ENCODE measurements at regions of chr22 and their contacts with region 1.

Region 1: DNA sequence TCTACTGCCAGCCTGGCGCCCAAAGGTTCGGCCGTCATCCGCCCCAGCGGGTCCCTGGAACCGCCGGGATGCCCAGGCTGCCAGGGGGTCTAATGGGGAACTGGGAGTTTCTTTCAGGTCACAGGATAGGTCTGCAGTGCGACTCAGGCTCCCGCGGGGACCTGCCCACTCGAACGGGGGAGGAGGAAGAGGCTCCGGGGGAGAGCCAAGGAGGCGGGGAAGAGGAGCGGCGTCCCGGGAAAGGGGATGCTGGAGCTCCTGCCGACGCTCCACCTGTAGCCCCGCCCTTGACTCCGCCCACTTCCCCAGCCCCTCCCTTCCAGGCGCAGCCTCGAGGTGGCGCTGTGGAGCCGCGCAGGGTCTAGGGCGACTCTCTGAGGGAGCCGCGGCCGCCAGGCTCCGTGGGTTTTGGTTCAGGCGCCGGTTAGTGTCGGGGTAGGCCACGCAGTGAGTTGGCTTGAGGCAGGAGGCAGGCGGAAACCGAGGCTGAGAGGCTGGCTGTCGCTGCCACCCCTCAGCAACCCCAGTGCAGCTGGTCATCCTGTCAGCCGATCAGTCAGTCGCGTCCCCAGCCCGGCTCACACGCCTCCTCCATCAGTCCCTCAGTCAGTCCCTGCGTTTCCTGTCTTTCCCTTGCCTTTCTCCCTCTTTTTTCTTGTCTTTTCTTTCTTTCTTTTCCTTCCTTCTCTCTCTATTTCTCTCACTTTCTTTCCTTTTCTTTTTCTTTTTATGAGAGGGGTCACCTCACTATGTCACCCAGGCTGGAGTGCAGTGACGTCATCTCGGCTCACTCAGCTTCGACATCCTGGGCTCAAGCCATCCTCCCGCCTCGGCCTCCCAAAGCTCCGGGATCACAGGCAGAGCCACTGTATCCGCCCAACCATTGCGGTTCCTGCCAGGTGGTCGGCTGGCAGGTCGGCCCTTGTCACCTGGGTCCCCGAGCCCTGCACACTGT is 26.4 kb downstream of the YWHAH start:
- DNase-seq: peak; percentile 61 to 100
- H3K4me3 ChIP-seq: peak overlapping the region; percentile 36 to 88 (median 68)
- H3K27ac ChIP-seq: no peak overlapping the region
- H3K4me1 ChIP-seq: peaks cover 0 to 2% (median 0%) of the 10 kb centered on the region in 4 experiments; a peak in 1 of 7 replicates
- H3K27me3 ChIP-seq: peaks cover 0 to 7% (median 2%) of the 10 kb centered on the region in 4 experiments; a peak in 3 of 7 replicates
- CTCF ChIP-seq: peak; percentile 93 to 95 (median 94)
- EP300 ChIP-seq: 0 out of 3 replicates have a peak, but pooled peaks of 1 of the 2 experiments have one; percentile 31
- POLR2A ChIP-seq: no peak
- RAD21 ChIP-seq: peak; percentile 73 to 84

Region 2: DNA sequence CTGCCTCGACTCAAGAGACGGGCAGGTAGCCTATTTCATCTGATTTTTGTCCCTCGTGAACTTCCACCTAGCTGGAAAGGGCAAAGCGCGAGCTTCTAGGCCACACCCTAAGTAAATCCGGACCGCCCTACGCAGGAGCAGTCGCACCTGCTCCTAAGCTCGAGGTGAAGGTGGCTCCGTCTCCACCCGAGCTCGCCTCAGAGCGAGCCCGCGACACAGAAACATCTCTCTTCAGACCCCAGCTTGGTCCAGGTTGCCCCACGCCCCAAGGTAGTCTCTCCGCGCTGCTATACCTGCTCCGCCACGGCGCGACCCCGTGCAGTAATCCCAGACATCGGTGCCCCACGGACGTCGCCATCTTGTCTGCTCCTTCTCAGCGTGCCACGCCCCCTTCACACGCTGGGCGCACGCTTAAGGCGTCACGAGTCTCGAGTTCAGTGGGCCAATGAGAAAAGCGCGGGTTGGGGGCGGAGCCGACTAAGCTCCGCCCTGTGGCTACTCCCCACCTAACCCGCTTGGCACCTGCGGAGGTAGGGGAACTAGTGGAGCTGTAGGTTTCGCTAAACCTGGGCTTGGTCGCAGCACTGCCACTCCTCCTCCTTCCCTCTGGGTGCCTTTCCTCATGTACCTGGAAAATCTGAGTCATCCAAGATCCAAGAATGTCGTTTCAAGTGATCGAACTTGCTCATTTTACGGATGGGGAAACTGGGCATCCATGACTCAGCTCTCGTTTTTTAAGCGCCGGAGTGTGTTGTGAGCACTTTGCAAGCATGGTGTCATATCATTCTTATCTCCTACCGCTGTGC is 308.7 kb before region 1 on chr22 and contains the start of gene PISD:
- CTCF ChIA-PET with region 1: interaction called, 15 read pairs
- POLR2A ChIA-PET with region 1: no interaction called
- DNase-seq: peak; percentile 92 to 99
- H3K4me3 ChIP-seq: peak within 1 kb of the TSS; percentile 51 to 97 (median 90)
- H3K27ac ChIP-seq: peak within 1 kb of the TSS; percentile 82
- H3K4me1 ChIP-seq: peaks cover 3 to 7% (median 7%) of the 10 kb centered on the region in 4 experiments; a peak in 5 of 7 replicates
- H3K27me3 ChIP-seq: no peaks in the 10 kb centered on the region
- CTCF ChIP-seq: no peak
- EP300 ChIP-seq: 0 out of 3 replicates have a peak, but pooled peaks of 1 of the 2 experiments have one; percentile 40
- POLR2A ChIP-seq: peak; percentile 73 to 92; a peak in 2 of 3 replicates
- RAD21 ChIP-seq: no peak
- total RNA-seq, gene PISD: 46.0 and 47.8 TPM in 2 replicates

Region 3: GRCh38 chr22:31818481-31819392 is 152.0 kb before region 1 on chr22:
- CTCF ChIA-PET with region 1: interaction called, 10 read pairs
- POLR2A ChIA-PET with region 1: no interaction called
- DNase-seq: no peak
- H3K4me3 ChIP-seq: no peak overlapping the region
- H3K27ac ChIP-seq: no peak overlapping the region
- H3K4me1 ChIP-seq: no peaks in the 10 kb centered on the region
- H3K27me3 ChIP-seq: no peaks in the 10 kb centered on the region
- CTCF ChIP-seq: peak; percentile 17 to 42 (median 31)
- EP300 ChIP-seq: no peak
- POLR2A ChIP-seq: no peak
- RAD21 ChIP-seq: peak; percentile 46 to 65

Region 4: DNA sequence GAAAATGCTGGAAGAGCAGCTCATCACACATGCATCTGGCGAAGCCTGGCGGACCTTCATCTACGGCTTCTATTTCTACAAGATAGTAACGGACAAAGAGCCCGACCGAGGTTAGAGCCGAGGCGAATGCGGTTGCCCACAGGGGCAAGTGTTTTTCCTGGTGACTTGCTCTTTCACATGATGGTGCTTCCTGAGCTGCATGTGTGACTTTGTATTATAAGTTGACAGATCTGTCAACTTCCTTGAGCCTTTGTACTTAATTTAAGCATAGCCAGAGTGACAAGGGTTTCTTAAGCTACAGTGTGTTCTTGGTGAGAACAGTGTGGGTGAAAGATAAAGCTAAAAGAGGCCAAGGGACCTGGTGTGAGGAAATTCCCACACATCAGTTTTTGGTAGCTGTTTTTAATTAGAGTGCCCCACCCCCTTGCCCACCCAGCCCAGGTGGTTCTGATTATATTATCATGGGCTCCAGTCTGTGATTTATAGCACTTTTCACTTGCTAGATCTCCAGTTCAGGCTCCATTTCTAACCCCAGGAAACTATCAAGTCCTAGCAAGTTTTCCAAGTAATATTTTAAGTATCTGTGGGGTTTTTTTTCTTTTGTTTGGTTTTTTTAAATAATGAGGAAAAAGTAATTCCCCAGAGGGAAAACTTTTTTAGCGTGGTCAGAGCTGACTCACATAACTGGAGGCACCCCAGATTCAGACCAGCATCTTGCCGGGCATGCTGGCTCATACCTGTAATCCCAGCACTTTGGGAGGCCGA is 94.4 kb before region 1 on chr22:
- CTCF ChIA-PET with region 1: interaction called, 11 read pairs
- POLR2A ChIA-PET with region 1: no interaction called
- DNase-seq: no peak
- H3K4me3 ChIP-seq: no peak overlapping the region
- H3K27ac ChIP-seq: no peak overlapping the region
- H3K4me1 ChIP-seq: no peaks in the 10 kb centered on the region
- H3K27me3 ChIP-seq: no peaks in the 10 kb centered on the region
- CTCF ChIP-seq: no peak
- EP300 ChIP-seq: no peak
- POLR2A ChIP-seq: no peak
- RAD21 ChIP-seq: no peak

Region 5: DNA sequence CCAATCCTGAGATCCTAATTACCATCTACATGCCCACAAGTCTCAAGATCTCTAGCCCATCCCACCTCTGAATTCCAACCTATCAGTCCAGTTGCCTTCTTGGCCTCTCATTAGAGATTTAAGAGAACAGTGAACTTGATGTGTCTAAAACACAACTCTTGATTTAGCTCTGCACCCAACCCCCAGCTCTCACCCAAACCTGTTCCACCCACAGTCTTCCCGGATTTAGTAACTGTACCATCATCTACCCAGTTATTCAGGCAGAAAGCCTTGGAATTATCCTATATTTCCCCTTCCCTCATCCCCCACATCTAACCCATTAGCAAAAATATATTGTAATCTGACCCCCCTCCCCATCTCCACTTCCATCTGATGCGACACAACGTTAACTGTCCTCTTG is 50.5 kb before region 1 on chr22:
- CTCF ChIA-PET with region 1: interaction called, 14 read pairs
- POLR2A ChIA-PET with region 1: no interaction called
- DNase-seq: no peak
- H3K4me3 ChIP-seq: no peak overlapping the region
- H3K27ac ChIP-seq: no peak overlapping the region
- H3K4me1 ChIP-seq: no peaks in the 10 kb centered on the region
- H3K27me3 ChIP-seq: no peaks in the 10 kb centered on the region
- CTCF ChIP-seq: no peak
- EP300 ChIP-seq: no peak
- POLR2A ChIP-seq: no peak
- RAD21 ChIP-seq: no peak

Region 6: DNA sequence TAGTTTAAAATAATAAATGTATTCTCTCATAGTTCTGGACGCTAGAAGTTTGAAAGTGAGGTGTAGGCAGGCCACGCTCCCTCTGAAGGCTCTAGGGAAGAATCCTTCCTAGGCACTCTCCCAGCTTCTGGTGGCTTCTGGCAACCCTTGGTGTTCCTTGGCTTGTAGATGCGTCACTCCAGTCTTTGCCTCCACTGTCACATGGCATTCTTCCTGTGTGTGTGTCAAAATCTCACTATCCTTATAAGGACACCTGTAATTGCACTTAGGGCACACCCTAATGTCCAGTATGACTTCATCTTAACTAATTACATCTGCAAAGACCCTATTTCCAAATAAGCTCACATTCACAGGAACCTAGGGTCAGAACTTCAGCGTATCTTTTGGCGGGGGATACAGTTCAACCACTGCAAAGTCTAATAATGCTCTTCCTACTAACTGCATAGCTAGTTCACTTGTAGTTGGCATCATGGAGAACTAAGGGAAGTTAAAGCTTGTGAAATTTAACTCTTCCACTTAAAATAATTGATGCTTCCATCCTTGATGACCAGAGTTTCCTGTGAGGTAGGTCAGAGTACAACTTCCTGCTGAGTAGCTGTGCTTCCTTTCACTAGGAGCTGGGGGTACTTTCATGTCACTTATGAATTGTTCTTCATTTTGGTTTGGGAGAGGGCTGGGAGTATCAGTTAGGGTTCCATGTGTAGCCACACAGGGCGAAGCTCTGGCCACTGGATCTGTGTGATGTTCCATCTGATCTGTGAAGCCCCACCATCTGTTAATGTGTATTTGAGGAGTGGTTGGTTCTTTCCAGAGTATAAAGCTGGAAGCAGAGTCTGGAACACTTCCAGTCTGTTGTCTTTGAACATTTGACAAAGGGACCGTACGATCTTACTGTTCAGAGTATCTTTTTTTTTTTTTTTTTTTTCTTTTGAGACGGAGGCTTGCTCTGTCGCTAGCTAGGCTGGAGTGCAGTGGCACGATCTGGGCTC is 15.9 kb before region 1 on chr22:
- CTCF ChIA-PET with region 1: interaction called, 21 read pairs
- POLR2A ChIA-PET with region 1: interaction called, 4 read pairs
- DNase-seq: no peak
- H3K4me3 ChIP-seq: no peak overlapping the region
- H3K27ac ChIP-seq: no peak overlapping the region
- H3K4me1 ChIP-seq: peaks cover 2 to 12% (median 7%) of the 10 kb centered on the region in 4 experiments; a peak in 6 of 7 replicates
- H3K27me3 ChIP-seq: no peaks in the 10 kb centered on the region
- CTCF ChIP-seq: no peak
- EP300 ChIP-seq: no peak
- POLR2A ChIP-seq: no peak
- RAD21 ChIP-seq: no peak

Region 7: GRCh38 chr22:32080904-32081303 is 110.1 kb after region 1 on chr22:
- CTCF ChIA-PET with region 1: interaction called, 243 read pairs
- POLR2A ChIA-PET with region 1: no interaction called
- DNase-seq: no peak
- H3K4me3 ChIP-seq: no peak overlapping the region
- H3K27ac ChIP-seq: no peak overlapping the region
- H3K4me1 ChIP-seq: no peaks in the 10 kb centered on the region
- H3K27me3 ChIP-seq: peaks cover 0 to 4% (median 0%) of the 10 kb centered on the region in 4 experiments; a peak in 1 of 7 replicates
- CTCF ChIP-seq: peak; percentile 14 to 80 (median 79)
- EP300 ChIP-seq: no peak
- POLR2A ChIP-seq: no peak
- RAD21 ChIP-seq: peak; percentile 89 to 91

Region 8: GRCh38 chr22:32164075-32164860 is 193.5 kb after region 1 on chr22:
- CTCF ChIA-PET with region 1: no interaction called
- POLR2A ChIA-PET with region 1: no interaction called
- DNase-seq: no peak
- H3K4me3 ChIP-seq: no peak overlapping the region
- H3K27ac ChIP-seq: no peak overlapping the region
- H3K4me1 ChIP-seq: peaks cover 0 to 3% (median 0%) of the 10 kb centered on the region in 4 experiments; a peak in 3 of 7 replicates
- H3K27me3 ChIP-seq: no peaks in the 10 kb centered on the region
- CTCF ChIP-seq: no peak
- EP300 ChIP-seq: no peak
- POLR2A ChIP-seq: no peak
- RAD21 ChIP-seq: no peak

Region 9: GRCh38 chr22:32202539-32203180 is 231.9 kb after region 1 on chr22:
- CTCF ChIA-PET with region 1: no interaction called
- POLR2A ChIA-PET with region 1: no interaction called
- DNase-seq: peak in 1 of 2 experiments; percentile 59
- H3K4me3 ChIP-seq: peak overlapping the region in 3 of 4 experiments; percentile 47 to 61 (median 56); a peak in 4 of 8 replicates
- H3K27ac ChIP-seq: no peak overlapping the region
- H3K4me1 ChIP-seq: peaks cover 0 to 32% (median 15%) of the 10 kb centered on the region in 4 experiments; a peak in 5 of 7 replicates
- H3K27me3 ChIP-seq: peaks cover 19 to 50% (median 42%) of the 10 kb centered on the region in 4 experiments
- CTCF ChIP-seq: peak; percentile 77 to 89 (median 87)
- EP300 ChIP-seq: no peak
- POLR2A ChIP-seq: no peak
- RAD21 ChIP-seq: peak; percentile 58 to 68

Region 10: GRCh38 chr22:32348031-32348611 is 377.4 kb after region 1 on chr22:
- CTCF ChIA-PET with region 1: no interaction called
- POLR2A ChIA-PET with region 1: no interaction called
- DNase-seq: no peak
- H3K4me3 ChIP-seq: no peak overlapping the region
- H3K27ac ChIP-seq: no peak overlapping the region
- H3K4me1 ChIP-seq: no peaks in the 10 kb centered on the region; a peak in 1 of 7 replicates
- H3K27me3 ChIP-seq: no peaks in the 10 kb centered on the region
- CTCF ChIP-seq: no peak
- EP300 ChIP-seq: no peak
- POLR2A ChIP-seq: no peak
- RAD21 ChIP-seq: no peak